ENCODE measurements at regions of chr6 and their contacts with region 1.

Region 1: DNA sequence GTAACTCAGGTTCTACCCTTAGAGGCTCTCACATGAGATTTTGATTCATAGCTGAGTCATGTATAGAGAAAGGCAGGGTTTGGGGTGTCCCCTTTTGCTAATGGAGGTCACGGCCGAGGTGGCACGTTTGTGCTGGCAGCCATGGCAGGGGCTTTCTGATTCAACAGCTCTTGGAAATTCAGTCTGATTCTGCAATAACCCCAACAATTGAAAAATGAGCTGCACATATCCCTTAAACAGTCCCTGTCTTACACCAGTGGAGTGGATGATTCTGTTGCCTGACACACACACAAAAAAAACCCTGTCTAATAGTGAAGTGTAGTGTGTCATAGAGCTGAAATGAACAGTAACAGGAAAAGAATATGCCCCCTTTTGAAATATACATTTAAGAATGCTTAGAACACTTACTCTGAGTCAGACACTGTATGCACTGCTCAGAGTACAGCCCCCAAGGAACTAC is 40.4 kb upstream of the ARG1 start:
- DNase-seq: no peak
- ATAC-seq: no peak

Region 2: DNA sequence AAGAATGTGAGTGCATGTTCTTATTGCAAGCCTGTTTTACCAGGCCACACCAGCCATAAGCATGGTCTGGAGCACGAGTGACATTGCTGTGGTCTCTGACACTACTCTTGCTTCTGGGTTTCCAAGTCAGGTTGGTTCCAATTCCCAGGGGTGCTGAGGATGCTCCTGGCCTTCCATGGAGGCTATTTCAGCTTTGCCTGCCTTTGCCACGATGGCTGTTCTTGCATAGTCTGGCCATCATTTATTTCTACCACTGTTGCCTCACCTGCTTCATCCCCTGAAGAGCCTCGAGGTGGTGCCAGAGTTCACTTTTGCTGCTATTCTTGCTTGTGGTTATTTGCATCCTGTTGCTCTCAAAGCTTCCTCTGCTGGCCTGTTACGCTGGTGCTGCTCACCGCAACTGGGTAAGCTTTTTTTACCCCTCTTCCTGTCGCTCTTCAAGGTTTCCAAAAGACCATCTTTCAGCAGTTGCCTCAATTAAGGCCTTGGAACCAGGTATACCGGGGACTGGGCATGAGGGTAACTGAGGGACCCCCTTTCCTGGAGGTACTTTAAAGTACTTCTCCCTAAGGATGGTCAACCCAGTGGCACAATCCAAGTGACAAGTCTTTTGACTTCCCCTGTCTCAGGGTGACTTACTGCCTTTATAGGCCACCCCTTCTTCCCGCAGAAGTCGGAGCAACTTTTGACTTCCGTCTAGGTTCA is 332.9 kb before region 1 on chr6:
- intact Hi-C with region 1: loop called (anchors 2 to 10 kb)
- DNase-seq: peak; percentile 35
- ATAC-seq: peak; percentile 81 to 90

Region 3: DNA sequence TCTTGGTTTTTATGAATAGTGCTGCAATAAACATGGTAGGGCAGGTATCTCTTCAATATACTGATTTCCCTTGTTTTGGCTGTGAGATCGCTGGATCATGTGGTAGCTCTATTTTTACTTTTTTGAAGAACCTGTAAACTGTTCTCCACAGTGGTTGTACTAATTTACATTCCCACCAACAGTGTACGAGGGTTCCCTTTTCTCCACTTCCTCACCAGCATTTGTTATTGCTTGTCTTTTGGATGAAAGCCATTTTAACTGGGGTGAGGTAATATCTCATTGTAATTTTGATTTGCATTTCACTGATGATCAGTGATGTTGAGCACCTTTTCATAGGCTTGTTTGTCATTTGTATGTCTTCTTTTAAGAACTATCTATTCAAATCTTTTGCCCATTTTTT is 32.4 kb after region 1 on chr6:
- intact Hi-C with region 1: no loop called
- DNase-seq: no peak
- ATAC-seq: no peak

Region 4: DNA sequence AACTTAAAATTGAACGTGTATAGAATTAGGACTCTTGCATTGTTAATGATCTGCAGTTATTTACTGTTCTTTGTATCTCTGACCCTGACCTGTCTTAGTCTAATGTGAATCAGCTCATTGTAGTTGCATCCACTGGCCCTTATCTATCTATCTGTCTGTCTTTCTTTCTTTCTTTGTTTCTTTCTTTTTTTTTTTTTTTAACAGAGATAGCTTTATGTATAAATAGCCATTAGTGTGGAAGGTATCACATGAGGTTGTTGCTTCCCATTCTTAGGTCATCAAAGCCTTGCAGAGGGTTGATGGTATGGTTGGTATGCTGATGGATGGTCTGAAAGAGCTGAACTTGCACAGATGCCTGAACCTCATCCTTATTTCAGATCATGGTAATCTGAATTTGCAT is 335.1 kb after region 1 on chr6:
- intact Hi-C with region 1: no loop called
- DNase-seq: no peak
- ATAC-seq: no peak

Region 5: DNA sequence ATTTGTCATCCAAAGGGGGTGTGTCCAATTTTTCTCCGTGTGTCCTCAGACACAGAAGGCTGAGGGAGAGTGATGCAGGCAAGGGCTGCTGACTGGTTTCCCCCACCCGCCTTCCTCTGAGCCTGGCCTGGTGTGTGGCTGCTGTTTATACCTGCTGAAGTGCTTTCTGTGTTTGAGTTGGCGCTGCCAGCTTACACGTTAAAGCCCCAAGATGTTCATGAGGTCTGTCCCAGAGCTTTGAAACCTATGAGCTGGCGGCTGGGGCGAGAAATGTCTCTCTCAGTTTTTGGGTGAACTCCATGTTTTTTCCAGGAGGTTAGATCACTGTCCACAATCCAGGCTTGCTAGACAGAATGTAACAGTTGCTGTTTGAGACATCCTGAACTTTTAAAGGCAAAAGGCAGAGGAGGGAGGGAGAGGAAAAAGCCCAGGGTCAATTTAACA is 487.6 kb after region 1 on chr6:
- intact Hi-C with region 1: no loop called
- DNase-seq: peak; percentile 54
- ATAC-seq: peak; percentile 55 to 89

Region 6: DNA sequence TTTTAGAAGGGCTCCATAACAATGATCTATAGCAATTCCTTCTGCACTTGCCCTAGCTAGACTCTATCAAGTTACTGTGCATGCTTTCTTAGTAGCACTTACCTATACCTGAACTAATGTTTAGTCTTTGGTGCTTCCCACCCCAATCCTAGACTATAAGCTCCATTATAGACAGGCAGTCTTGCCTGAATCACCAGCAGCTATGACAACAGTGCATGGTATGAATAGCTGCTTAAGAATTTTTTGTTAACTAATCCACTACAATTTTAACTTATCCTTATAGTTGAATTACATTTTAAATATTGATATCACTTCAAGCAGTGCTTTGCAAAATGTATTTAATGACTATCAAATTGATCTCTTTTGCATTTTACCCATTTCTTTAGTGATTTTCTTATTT is 1446.1 kb after region 1 on chr6:
- intact Hi-C with region 1: no loop called
- DNase-seq: no peak
- ATAC-seq: no peak